ENCODE measurements at regions of chr16 and their contacts with region 1.

Region 1: GRCh38 chr16:18801197-18801972 is at the start of gene ARL6IP1:
- DNase-seq: peak; percentile 100
- H3K4me3 ChIP-seq: peak within 1 kb of the TSS; percentile 77 to 98 (median 92)
- H3K27ac ChIP-seq: peak within 1 kb of the TSS; percentile 71
- H3K4me1 ChIP-seq: peaks cover 62% of the 10 kb centered on the region
- H3K27me3 ChIP-seq: no peaks in the 10 kb centered on the region
- CTCF ChIP-seq: peak; percentile 95 to 96
- POLR2A ChIP-seq: peak; percentile 100
- total RNA-seq, gene ARL6IP1: 202 and 251 TPM in 2 replicates

Region 2: GRCh38 chr16:18782697-18783429 is 18.5 kb before region 1 on chr16:
- CTCF ChIA-PET with region 1: interaction called, 80 read pairs
- POLR2A ChIA-PET with region 1: interaction called, 81 read pairs
- dilution Hi-C with region 1: no loop called
- intact Hi-C with region 1: loop called (anchors 2 kb)
- DNase-seq: no peak
- H3K4me3 ChIP-seq: no peak overlapping the region
- H3K27ac ChIP-seq: no peak overlapping the region
- H3K4me1 ChIP-seq: peaks cover 24% of the 10 kb centered on the region
- H3K27me3 ChIP-seq: no peaks in the 10 kb centered on the region
- CTCF ChIP-seq: no peak
- POLR2A ChIP-seq: no peak

Region 3: GRCh38 chr16:18789850-18790724 is 11.3 kb before region 1 on chr16 and contains the start of gene RPS15A:
- CTCF ChIA-PET with region 1: interaction called, 80 read pairs
- POLR2A ChIA-PET with region 1: interaction called, 81 read pairs
- dilution Hi-C with region 1: no loop called
- intact Hi-C with region 1: loop called (anchors 1 kb)
- DNase-seq: peak; percentile 94
- H3K4me3 ChIP-seq: peak within 1 kb of the TSS; percentile 78 to 97 (median 86)
- H3K27ac ChIP-seq: peak within 1 kb of the TSS; percentile 72
- H3K4me1 ChIP-seq: peaks cover 41% of the 10 kb centered on the region
- H3K27me3 ChIP-seq: no peaks in the 10 kb centered on the region
- CTCF ChIP-seq: no peak
- POLR2A ChIP-seq: peak; percentile 88
- total RNA-seq, gene RPS15A: 1,299 and 1,300 TPM in 2 replicates

Region 4: DNA sequence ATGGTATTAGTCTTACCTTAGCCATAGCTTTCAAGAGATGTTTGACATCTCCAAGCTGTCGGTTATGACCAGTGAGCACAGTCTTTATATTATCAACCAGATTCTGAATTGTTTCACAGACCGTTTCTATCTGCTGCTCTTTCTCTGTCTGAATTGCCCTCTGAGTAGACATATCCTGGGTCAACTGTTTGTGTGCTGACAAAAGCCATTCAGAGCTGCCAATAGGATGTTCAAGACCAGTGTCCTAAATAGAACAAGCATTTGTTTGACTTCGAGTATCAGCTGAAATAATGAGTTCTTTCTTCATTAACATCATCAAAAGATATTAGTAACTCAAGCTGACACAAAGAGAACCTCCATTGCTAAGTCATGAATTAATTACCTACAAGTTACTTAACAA is 14.9 kb after region 1 on chr16:
- CTCF ChIA-PET with region 1: interaction called, 12 read pairs
- POLR2A ChIA-PET with region 1: interaction called, 4 read pairs
- dilution Hi-C with region 1: no loop called
- intact Hi-C with region 1: no loop called
- DNase-seq: no peak
- H3K4me3 ChIP-seq: no peak overlapping the region
- H3K27ac ChIP-seq: no peak overlapping the region
- H3K4me1 ChIP-seq: no peaks in the 10 kb centered on the region
- H3K27me3 ChIP-seq: no peaks in the 10 kb centered on the region
- CTCF ChIP-seq: no peak
- POLR2A ChIP-seq: no peak

Region 5: DNA sequence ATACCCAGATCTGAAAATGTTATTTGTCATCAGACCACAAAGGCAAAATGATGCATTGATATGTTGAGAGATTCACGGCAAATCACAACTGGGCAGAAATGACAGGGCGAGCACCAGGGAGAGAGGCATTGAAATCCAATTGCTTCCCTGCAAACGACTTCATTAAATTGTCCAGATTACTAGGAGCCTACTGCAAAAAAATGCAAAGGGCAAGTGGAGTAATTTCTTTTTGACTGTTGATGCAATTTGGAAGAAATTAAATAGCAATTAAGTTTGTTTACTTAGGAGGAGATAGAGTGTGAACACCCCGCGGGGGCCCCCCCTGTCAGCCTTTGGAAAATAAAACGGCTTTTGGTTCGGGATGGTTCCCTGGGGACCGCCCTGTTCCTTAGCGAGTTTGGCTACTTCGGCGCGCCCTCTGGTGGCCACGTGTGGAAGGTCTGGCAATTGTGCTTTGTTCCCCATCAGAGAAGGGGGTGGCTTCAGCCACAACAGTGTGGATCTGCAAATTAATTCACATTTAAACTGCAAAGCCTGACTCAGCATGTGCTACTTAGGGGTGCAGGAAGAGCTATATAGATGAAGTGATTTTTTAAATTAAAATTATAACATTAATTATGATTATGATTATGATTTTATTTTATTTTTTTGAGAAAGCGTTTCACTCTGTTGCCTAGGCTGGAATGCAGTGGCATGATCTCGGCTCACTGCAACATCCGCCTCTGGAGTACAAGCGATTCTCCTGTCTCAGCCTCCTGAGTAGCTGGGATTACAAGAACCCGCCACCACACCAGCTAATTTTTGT is 167.9 kb after region 1 on chr16:
- CTCF ChIA-PET with region 1: interaction called, 4 read pairs
- POLR2A ChIA-PET with region 1: no interaction called
- dilution Hi-C with region 1: no loop called
- intact Hi-C with region 1: loop called (anchors 1 kb)
- DNase-seq: peak; percentile 73
- H3K4me3 ChIP-seq: peak overlapping the region in 1 of 3 experiments; percentile 26
- H3K27ac ChIP-seq: no peak overlapping the region
- H3K4me1 ChIP-seq: no peaks in the 10 kb centered on the region
- H3K27me3 ChIP-seq: no peaks in the 10 kb centered on the region
- CTCF ChIP-seq: peak; percentile 89 to 92
- POLR2A ChIP-seq: no peak

Region 6: GRCh38 chr16:19521471-19522396 is 720.3 kb after region 1 on chr16 and contains the start of gene GDE1:
- CTCF ChIA-PET with region 1: no interaction called
- POLR2A ChIA-PET with region 1: no interaction called
- dilution Hi-C with region 1: no loop called
- intact Hi-C with region 1: loop called (anchors 10 kb)
- DNase-seq: peak; percentile 92
- H3K4me3 ChIP-seq: peak within 1 kb of the TSS; percentile 88 to 93 (median 89)
- H3K27ac ChIP-seq: peak within 1 kb of the TSS; percentile 50
- H3K4me1 ChIP-seq: peaks cover 21% of the 10 kb centered on the region
- H3K27me3 ChIP-seq: no peaks in the 10 kb centered on the region
- CTCF ChIP-seq: peak in 1 of 2 donors; percentile 64
- POLR2A ChIP-seq: peak; percentile 80
- total RNA-seq, gene GDE1: 50.5 and 51.5 TPM in 2 replicates

Measured in endothelial cell of umbilical vein (primary cell).